Heart right ventricle (tissue), 16 donors: ENCODE measurements at regions of chr5 and their contacts with region 1.

Region 1: DNA sequence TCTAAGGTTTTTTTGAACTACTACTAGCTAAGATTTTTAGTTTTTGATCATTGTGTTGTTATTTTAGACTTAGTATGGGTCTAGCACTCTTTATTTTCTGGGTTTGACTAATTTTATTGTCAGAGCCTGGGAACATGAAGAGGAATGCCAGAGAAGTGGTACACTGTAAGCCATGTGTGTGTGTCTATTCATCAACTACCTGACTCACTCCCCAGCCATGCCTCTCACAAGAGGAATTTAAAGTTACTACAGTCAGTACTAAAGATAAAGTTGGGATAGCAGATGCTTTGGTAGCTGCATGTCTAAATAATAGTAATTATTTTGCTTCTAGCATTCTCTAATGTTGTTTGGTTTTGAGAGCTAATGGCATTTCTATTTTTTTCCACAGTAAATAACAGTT is 264.8 kb downstream of the CSNK1G3 start:
- DNase-seq: no peak
- ATAC-seq: no peak
- H3K4me3 ChIP-seq: no peak overlapping the region
- H3K27ac ChIP-seq: no peak overlapping the region
- H3K4me1 ChIP-seq: no peaks in the 10 kb centered on the region
- H3K27me3 ChIP-seq: no peaks in the 10 kb centered on the region
- CTCF ChIP-seq: no peak

Region 2: GRCh38 chr5:123520677-123521247 is 256.0 kb before region 1 on chr5:
- intact Hi-C with region 1: no loop called
- DNase-seq: no peak
- ATAC-seq: no peak
- H3K4me3 ChIP-seq: no peak overlapping the region
- H3K27ac ChIP-seq: no peak overlapping the region
- H3K4me1 ChIP-seq: peaks cover 0 to 41% (median 26%) of the 10 kb centered on the region in 9 donors
- H3K27me3 ChIP-seq: no peaks in the 10 kb centered on the region
- CTCF ChIP-seq: no peak

Region 3: GRCh38 chr5:123671042-123671441 is 105.7 kb before region 1 on chr5:
- intact Hi-C with region 1: no loop called
- DNase-seq: peak in 1 of 2 donors; percentile 57
- ATAC-seq: peak in 3 of 8 donors; percentile 39 to 46 (median 42)
- H3K4me3 ChIP-seq: no peak overlapping the region
- H3K27ac ChIP-seq: no peak overlapping the region
- H3K4me1 ChIP-seq: peaks cover 0 to 26% (median 15%) of the 10 kb centered on the region in 9 donors
- H3K27me3 ChIP-seq: no peaks in the 10 kb centered on the region
- CTCF ChIP-seq: peak; percentile 76 to 91 (median 84)

Region 4: GRCh38 chr5:123717139-123717538 is 59.6 kb before region 1 on chr5:
- intact Hi-C with region 1: no loop called
- DNase-seq: no peak
- ATAC-seq: no peak
- H3K4me3 ChIP-seq: no peak overlapping the region
- H3K27ac ChIP-seq: no peak overlapping the region
- H3K4me1 ChIP-seq: peaks cover 0 to 4% (median 0%) of the 10 kb centered on the region in 9 donors
- H3K27me3 ChIP-seq: no peaks in the 10 kb centered on the region
- CTCF ChIP-seq: no peak

Region 5: GRCh38 chr5:123732261-123732660 is 44.5 kb before region 1 on chr5:
- intact Hi-C with region 1: loop called in 1 of 10 experiments (anchors 2 kb)
- DNase-seq: no peak
- ATAC-seq: no peak
- H3K4me3 ChIP-seq: no peak overlapping the region
- H3K27ac ChIP-seq: no peak overlapping the region
- H3K4me1 ChIP-seq: no peaks in the 10 kb centered on the region
- H3K27me3 ChIP-seq: no peaks in the 10 kb centered on the region
- CTCF ChIP-seq: no peak

Region 6: DNA sequence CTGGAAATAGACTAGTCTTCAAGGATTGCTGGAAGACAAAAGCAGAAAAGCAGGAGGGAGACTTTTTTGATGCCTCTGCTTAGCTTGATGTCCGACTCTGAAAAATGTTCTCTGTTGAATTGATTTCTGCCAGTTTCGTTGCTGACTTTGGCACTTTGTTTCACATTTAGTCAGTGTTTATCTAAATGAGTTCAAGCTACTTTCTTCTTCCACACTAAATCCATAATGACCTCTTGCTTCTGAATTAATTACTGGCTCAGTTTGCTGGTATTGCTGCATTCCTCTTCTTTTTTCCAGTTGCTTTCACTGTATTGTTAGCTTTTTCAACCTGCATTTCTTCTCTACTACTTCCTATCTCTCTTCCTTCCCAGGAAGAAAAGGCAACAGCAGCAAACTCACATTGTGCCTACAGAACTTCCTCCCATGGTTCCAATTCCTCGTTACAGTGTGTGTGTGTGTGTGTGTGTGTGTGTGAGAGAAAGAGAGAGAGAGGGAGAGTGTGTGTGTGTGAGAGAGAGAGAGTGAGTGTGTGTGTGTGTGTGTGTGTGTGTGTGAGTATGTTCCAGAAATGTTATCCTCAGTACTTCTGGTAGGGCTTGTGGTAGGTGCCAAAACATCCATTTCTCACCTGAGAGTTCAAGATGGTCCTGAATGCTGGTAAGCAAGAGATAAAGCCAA is 29.9 kb before region 1 on chr5:
- intact Hi-C with region 1: no loop called
- DNase-seq: no peak
- ATAC-seq: no peak
- H3K4me3 ChIP-seq: no peak overlapping the region
- H3K27ac ChIP-seq: no peak overlapping the region
- H3K4me1 ChIP-seq: no peaks in the 10 kb centered on the region
- H3K27me3 ChIP-seq: no peaks in the 10 kb centered on the region
- CTCF ChIP-seq: no peak